CD14-positive monocyte (primary cell): ENCODE measurements at regions of chr3 and their contacts with region 1.

Region 1: GRCh38 chr3:160210799-160211221 is 14.4 kb upstream of the C3orf80 start:
- DNase-seq: peak; percentile 18 to 41 (median 32)
- H3K4me3 ChIP-seq: no peak overlapping the region
- H3K4me3 Mint-ChIP-seq: no peak overlapping the region
- H3K27ac ChIP-seq: no peak overlapping the region
- H3K27ac Mint-ChIP-seq: no peak overlapping the region
- H3K4me1 ChIP-seq: no peaks in the 10 kb centered on the region
- H3K4me1 Mint-ChIP-seq: peaks cover 7% of the 10 kb centered on the region
- H3K27me3 ChIP-seq: no peaks in the 10 kb centered on the region
- H3K27me3 Mint-ChIP-seq: peaks cover 0 to 6% (median 0%) of the 10 kb centered on the region in 3 donors
- CTCF ChIP-seq: peak; percentile 46

Region 2: GRCh38 chr3:160038862-160039562 is 171.8 kb before region 1 on chr3:
- intact Hi-C with region 1: loop called (anchors 10 kb)
- DNase-seq: no peak
- H3K4me3 ChIP-seq: peak overlapping the region in 1 of 3 experiments; percentile 56
- H3K4me3 Mint-ChIP-seq: peak overlapping the region; percentile 59 to 90
- H3K27ac ChIP-seq: no peak overlapping the region
- H3K27ac Mint-ChIP-seq: no peak overlapping the region
- H3K4me1 ChIP-seq: peaks cover 7 to 8% of the 10 kb centered on the region in 2 donors
- H3K4me1 Mint-ChIP-seq: peaks cover 15% of the 10 kb centered on the region
- H3K27me3 ChIP-seq: peaks cover 20 to 24% of the 10 kb centered on the region in 2 donors
- H3K27me3 Mint-ChIP-seq: peaks cover 30 to 37% (median 30%) of the 10 kb centered on the region in 3 donors
- CTCF ChIP-seq: no peak